ENCODE measurements at regions of chr15 and their contacts with region 1.

Region 1: DNA sequence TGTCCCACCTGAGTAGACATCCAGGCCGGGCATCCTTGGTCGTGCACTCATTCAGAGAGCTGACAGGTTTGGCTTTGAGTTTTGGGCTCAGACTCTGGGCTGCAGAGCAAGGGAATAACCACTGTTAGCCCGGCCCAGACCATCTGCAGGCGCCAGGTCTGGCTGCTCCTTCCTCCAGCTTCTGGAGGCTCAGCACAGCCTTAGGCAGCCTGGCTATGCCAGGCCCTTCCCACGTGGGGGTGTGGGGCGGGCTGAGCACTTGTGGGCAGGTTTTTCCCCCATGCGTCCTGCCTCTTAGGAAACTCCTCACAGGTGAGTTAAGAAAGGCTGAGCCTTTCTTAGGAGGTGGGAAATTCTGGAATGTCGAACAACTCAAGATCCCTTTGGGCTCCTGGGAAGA is 11.2 kb downstream of the PLA2G4B start:
- DNase-seq: no peak
- H3K4me3 ChIP-seq: no peak overlapping the region
- H3K27ac ChIP-seq: no peak overlapping the region
- H3K4me1 ChIP-seq: no peaks in the 10 kb centered on the region
- H3K27me3 ChIP-seq: no peaks in the 10 kb centered on the region
- CTCF ChIP-seq: no peak
- POLR2A ChIP-seq: no peak

Region 2: GRCh38 chr15:41917767-41918430 is 68.0 kb after region 1 on chr15:
- intact Hi-C with region 1: loop called (anchors 10 kb)
- DNase-seq: no peak
- H3K4me3 ChIP-seq: no peak overlapping the region
- H3K27ac ChIP-seq: peak overlapping the region in 1 of 2 donors; percentile 54
- H3K4me1 ChIP-seq: no peaks in the 10 kb centered on the region
- H3K27me3 ChIP-seq: no peaks in the 10 kb centered on the region
- CTCF ChIP-seq: no peak
- POLR2A ChIP-seq: no peak

Measured in uterus (tissue), 4 donors.